PC-9 (cell line): ENCODE measurements at regions of chr16 and their contacts with region 1.

Region 1: DNA sequence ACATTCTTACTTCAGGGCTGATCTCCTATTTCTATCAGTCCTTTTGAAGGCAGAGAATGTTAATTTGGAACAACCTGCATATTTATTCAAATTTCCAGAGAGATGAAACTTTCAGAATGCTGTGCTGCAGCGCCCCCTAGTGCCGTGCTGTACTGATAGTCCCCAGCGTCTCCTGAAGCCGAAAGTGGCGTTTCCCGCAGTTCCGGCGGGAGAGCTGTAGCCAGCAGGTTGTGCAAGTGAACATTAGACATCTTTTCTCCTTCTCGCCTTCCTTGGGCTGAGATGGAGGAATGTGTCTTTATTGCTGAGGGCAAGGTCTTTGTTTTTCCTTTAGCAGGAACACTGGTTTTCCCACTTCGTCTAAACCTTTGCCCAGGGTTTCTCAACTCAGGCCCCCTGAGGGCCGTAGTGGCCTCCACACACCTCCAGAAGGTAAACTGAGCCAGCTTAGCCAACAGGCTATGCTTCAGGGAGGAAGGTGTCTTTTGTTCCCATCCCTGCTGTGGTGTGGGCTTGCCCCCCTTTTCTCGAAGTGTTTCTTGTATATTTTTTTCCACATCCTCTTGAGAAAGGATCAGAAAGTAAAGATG is 26.4 kb downstream of the USP10 start:
- DNase-seq: peak; percentile 90 to 91
- H3K4me3 ChIP-seq: peak overlapping the region; percentile 23; the same call in 1 of the 2 replicates
- H3K27ac ChIP-seq: peak overlapping the region; percentile 84
- H3K4me1 ChIP-seq: peaks cover 84% of the 10 kb centered on the region
- H3K27me3 ChIP-seq: no peaks in the 10 kb centered on the region
- CTCF ChIP-seq: peak; percentile 98

Region 2: DNA sequence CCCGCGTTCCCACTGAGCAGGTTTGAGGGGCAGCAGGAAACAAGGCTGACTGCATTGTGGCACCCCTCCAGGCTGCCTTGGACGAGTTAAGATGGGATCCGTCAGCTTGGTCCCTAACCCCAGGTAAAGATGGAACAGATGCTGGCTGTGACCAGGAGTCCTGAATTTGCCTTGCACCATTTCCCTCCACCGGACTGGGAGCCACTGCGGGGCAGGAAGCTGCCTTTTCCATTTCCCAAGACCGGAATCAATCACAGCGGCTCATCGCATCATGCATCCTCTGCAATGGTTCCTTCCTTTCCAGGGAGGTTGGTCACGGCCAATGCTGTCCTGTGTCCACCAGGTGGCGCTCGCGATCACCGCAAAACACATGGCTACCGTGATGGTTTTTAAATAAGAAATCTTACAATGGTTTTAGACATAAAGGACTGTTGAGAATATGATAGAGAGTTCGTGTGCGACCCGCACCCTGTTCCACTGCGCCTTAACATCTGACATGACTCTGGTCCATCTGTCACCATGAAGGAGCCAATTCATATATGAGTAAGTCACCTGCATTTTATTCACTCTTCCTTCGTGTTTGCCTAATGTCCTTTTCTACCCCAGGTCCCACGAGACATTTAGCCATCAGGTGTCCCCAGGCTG is 214.9 kb before region 1 on chr16:
- CTCF ChIA-PET with region 1: interaction called, 10 read pairs
- POLR2A ChIA-PET with region 1: no interaction called
- intact Hi-C with region 1: loop called (anchors 1 kb)
- DNase-seq: peak; percentile 66 to 76
- H3K4me3 ChIP-seq: no peak overlapping the region
- H3K27ac ChIP-seq: no peak overlapping the region
- H3K4me1 ChIP-seq: peaks cover 9% of the 10 kb centered on the region; the same call in 1 of the 2 replicates
- H3K27me3 ChIP-seq: no peaks in the 10 kb centered on the region
- CTCF ChIP-seq: peak; percentile 96

Region 3: DNA sequence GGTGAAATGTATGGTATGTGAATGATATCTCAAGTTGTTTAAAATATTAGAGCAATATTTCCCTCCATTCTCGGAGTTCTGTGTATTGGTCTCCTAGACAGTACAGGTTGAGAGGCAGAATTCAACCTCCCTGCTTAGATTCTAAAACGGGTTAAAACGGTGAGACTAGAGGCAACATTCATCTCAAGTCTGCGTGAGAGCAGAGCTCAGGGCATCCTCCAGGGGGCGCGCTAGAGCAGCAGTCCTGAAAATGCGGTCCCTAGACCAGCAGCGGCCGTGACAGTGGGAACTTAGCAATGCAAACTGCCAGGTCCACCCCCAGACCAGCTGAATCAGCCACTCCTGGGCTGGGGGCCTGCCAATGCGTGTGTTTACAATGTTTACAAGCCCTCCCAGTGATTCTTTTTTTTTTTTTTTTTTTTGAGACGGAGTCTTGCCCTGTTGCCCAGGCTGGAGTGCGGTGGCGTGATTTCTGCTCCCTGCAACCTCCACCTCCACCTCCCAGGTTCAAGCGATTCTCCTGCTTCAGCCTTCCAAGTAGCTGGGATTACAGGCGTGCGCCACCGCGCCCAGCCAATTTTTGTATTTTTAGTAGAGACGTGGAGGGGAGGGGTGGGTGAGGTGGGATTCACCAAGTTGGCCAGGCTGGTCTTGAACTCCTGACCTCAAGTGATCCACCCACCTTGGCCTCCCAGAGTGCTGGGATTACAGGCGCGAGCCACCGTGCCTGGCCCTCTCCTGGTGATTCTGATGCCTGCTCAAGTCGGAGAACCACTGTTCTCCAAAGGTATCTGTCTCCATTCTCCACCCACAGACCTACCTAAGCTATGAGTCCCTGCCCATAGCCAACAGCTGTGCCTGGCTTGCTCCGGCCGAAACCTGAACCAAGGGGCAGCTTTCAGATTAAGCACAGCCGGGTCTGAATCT is 53.6 kb before region 1 on chr16:
- CTCF ChIA-PET with region 1: interaction called, 10 read pairs
- POLR2A ChIA-PET with region 1: no interaction called
- intact Hi-C with region 1: loop called (anchors 2 kb)
- DNase-seq: peak in 1 of 2 experiments; percentile 68
- H3K4me3 ChIP-seq: no peak overlapping the region
- H3K27ac ChIP-seq: no peak overlapping the region
- H3K4me1 ChIP-seq: peaks cover 15% of the 10 kb centered on the region
- H3K27me3 ChIP-seq: no peaks in the 10 kb centered on the region
- CTCF ChIP-seq: peak; percentile 86

Region 4: DNA sequence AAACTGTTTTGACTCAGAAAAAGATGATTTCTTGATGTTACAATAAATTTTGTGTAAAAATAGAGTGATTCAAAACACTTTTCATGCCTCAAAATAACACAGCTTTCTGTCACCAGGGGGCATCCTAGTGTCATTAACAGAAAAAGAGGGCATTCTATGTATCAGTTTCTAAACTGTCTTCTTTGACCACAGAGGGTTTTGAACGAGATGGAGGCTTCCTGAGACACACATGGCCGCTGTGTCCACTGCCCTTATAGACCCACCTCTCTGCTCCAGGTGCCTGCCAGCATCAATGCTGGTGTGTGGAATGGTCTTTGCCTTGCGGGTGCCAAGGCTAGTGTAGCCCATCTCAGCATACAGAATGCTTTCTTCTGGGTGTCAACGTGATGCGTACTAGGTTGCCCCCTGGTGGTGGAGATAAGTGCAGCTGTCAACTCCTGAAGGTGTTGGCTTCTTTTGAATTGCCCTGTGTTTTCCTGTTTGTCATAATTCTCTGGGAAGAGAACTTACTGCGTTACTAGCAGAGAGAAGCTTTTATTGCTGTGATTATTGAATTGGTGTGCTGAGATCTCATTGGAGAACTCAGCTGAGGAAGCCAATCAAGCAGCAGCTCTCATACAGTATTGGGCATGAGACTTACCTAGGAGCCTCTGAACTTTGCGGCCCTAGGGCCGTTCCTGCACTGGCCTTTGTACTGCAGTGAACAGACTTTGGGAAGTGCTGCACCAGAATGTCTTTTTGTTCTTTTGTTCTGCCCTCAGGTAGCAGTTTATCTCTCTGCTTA is 12.3 kb after region 1 on chr16:
- CTCF ChIA-PET with region 1: interaction called, 7 read pairs
- POLR2A ChIA-PET with region 1: no interaction called
- intact Hi-C with region 1: loop called (anchors 1 kb)
- DNase-seq: peak in 1 of 2 experiments; percentile 66
- H3K4me3 ChIP-seq: no peak overlapping the region
- H3K27ac ChIP-seq: 0 out of 2 replicates have a peak overlapping the region, but pooled peaks have one; percentile 18
- H3K4me1 ChIP-seq: peaks cover 48% of the 10 kb centered on the region
- H3K27me3 ChIP-seq: no peaks in the 10 kb centered on the region
- CTCF ChIP-seq: peak; percentile 89